MCF 10A (cell line): ENCODE measurements at regions of chr15 and their contacts with region 1.

Region 1: DNA sequence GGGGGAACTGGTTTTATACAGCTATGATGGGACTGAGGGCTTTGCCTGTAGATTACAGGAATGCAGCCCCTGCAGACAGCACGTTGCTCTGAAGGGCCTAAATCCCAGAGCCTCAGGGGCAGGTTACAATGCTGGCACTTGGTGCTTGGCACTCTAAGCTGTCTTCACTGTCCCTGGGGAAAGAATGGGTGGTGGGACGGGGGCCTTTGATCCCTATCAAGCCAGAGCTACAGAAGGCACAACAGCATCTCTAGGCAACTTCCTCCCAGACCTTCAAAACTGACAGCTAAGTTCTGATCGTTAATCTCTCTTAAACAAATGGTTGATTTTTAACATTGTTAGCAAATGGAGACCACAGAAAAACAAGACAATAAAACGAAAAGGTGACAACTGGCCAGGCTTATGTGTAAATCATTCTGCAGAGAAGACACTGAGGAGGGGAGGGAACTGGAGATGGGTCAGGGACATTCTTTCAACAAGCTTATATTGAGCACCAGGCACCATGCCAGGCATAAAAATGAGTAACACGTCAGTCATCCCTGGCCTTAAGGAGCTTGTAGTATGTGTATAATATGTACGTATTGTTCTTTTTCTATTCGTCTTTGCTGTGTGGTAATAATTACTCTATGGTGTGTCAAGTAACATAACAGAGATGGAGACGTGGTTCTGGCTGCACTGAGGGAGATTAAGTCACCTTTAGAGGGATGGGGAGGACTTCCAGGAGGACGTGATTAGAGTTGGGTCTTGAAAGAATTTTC is 49.1 kb downstream of the CA12 start:
- DNase-seq: peak; percentile 97
- H3K4me3 Mint-ChIP-seq: peak overlapping the region; percentile 2
- H3K27ac Mint-ChIP-seq: peak overlapping the region; percentile 13
- H3K4me1 Mint-ChIP-seq: peaks cover 20% of the 10 kb centered on the region
- H3K27me3 Mint-ChIP-seq: no peaks in the 10 kb centered on the region
- CTCF ChIP-seq: no peak

Region 2: DNA sequence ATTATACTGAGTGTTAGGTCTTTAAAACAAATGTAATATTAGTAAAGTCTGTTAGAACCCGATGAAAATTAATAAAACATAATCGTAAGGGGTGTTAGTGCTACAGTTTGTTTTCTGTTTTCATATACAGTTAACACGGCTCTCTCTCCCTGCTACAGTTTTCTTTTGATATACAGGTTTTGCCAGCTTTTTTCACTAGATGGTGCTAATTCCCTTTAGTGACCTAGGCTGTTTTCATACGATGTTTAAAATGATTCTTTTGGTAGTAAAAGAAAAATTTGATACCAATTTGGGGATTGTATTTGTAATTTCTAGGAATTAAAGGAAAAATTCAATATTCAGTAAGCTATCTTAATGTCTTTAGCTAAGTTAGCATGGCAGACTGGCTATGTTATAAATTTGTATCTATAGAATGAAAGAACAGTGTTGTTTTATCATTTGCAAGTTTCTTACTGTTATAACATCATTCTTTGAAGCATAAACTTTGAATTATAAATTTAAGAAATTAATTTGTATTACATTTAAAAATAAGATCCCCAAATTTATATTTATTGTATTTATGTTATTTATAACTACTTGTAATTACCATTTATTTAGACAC is 43.7 kb before region 1 on chr15:
- CTCF ChIA-PET with region 1: interaction called, 10 read pairs
- POLR2A ChIA-PET with region 1: interaction called, 4 read pairs
- intact Hi-C with region 1: no loop called
- DNase-seq: peak; percentile 67
- H3K4me3 Mint-ChIP-seq: no peak overlapping the region
- H3K27ac Mint-ChIP-seq: no peak overlapping the region
- H3K4me1 Mint-ChIP-seq: no peaks in the 10 kb centered on the region
- H3K27me3 Mint-ChIP-seq: no peaks in the 10 kb centered on the region
- CTCF ChIP-seq: peak; percentile 61

Region 3: DNA sequence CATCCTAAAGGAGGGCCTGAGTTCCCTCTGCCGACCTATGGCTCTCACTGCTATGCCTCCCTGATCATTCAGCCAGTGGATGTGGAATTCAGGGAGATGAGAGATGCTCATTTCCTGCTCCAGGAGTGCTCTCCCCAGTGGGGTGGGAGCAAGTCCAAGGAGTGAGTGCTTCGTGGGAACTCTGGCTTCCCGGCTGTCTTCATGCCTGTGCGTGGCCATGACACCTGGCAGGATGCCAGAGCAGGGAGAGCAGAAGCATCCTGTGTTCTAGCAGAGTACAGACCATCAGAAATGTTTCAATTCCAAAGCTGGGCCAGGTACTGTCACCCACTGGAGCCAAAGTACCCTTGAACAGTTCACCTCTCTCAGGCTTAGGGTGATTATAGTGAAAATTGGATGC is 10.0 kb before region 1 on chr15:
- CTCF ChIA-PET with region 1: no interaction called
- POLR2A ChIA-PET with region 1: no interaction called
- intact Hi-C with region 1: no loop called
- DNase-seq: peak; percentile 29
- H3K4me3 Mint-ChIP-seq: no peak overlapping the region
- H3K27ac Mint-ChIP-seq: no peak overlapping the region
- H3K4me1 Mint-ChIP-seq: no peaks in the 10 kb centered on the region
- H3K27me3 Mint-ChIP-seq: no peaks in the 10 kb centered on the region
- CTCF ChIP-seq: no peak